ENCODE measurements at regions of chr18 and their contacts with region 1.

Region 1: DNA sequence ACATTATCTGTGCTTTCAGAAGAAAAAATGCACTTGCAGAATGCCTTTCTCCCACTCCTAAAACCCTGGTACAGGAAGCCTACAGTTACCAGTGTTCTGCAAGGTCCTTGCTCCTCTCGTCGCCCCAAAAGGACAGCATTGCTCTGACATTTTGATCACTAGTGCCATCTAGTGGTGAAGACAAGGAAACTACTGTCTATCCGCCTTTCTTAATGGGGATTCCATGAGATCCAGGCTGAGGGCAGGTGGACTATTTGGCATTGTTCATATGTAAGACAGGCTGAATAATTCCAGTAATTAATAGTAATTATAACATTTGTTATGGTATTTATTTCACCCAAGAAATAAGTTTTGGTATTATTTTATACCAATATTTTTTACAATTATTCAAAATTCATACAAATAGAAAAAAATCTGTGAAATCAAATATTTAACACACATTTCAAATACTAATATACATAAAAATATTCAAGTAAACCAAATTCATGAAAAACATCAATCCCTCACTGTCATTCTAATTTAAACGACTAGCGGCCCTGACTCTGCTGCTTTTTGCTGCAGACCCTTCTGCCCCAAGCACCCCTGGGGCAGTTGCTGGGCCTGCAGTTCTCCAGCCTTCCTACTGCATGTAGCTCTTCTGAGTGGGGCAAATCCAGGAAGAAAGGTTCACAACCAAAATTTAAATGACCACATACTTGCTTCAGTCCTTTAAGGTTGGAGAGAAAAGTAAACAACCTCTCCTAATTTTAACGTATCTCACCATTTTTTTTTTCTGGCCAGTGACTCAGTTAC is 19.0 kb downstream of the TPGS2 start:
- DNase-seq: peak; percentile 38 to 64 (median 61)
- H3K4me3 ChIP-seq: no peak overlapping the region
- H3K4me3 Mint-ChIP-seq: no peak overlapping the region
- H3K27ac ChIP-seq: no peak overlapping the region
- H3K27ac Mint-ChIP-seq: peak overlapping the region in 3 of 7 donors; percentile 1 to 87 (median 26)
- H3K4me1 ChIP-seq: no peaks in the 10 kb centered on the region
- H3K4me1 Mint-ChIP-seq: peaks cover 3 to 14% (median 9%) of the 10 kb centered on the region in 4 donors
- H3K27me3 ChIP-seq: no peaks in the 10 kb centered on the region
- H3K27me3 Mint-ChIP-seq: no peaks in the 10 kb centered on the region

Region 2: DNA sequence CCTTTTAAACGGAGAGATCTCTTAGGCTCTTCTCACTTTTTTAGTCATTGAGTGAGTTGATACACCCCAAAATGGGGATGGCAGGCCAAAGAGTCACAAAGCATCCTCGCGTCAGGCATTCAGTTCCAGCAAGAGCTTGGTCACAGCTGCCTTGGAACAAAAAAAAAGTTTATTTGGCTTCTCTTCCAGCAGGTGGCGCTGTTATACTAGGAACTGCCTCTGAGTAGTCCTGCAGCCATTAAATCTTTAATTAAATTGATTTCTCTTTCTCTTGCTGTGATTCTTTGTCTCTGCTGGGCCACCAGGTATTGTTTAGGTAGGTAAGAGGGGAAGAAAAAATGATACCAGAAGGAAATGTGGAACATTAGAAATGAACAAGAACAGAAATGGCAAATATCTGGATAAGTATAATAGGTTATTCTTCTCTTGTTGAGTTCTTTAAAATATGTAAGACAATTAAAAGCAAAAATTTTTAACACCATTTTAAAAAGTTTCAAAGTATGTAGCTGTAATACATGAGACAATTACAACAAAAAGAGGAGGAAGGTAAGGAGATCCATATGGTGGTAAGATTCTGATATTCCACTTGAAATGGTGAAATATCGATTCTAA is 1053.2 kb before region 1 on chr18:
- CTCF ChIA-PET with region 1: no interaction called
- POLR2A ChIA-PET with region 1: no interaction called
- intact Hi-C with region 1: loop called (anchors 5 kb)
- DNase-seq: peak in 4 of 5 donors; percentile 46 to 59 (median 58)
- H3K4me3 ChIP-seq: no peak overlapping the region
- H3K4me3 Mint-ChIP-seq: no peak overlapping the region
- H3K27ac ChIP-seq: no peak overlapping the region
- H3K27ac Mint-ChIP-seq: no peak overlapping the region
- H3K4me1 ChIP-seq: no peaks in the 10 kb centered on the region
- H3K4me1 Mint-ChIP-seq: no peaks in the 10 kb centered on the region
- H3K27me3 ChIP-seq: no peaks in the 10 kb centered on the region
- H3K27me3 Mint-ChIP-seq: peaks cover 11 to 17% of the 10 kb centered on the region in 2 donors

Region 3: GRCh38 chr18:35811896-35812295 is 997.9 kb before region 1 on chr18:
- CTCF ChIA-PET with region 1: no interaction called
- POLR2A ChIA-PET with region 1: no interaction called
- intact Hi-C with region 1: no loop called
- DNase-seq: no peak
- H3K4me3 ChIP-seq: no peak overlapping the region
- H3K4me3 Mint-ChIP-seq: no peak overlapping the region
- H3K27ac ChIP-seq: no peak overlapping the region
- H3K27ac Mint-ChIP-seq: no peak overlapping the region
- H3K4me1 ChIP-seq: no peaks in the 10 kb centered on the region
- H3K4me1 Mint-ChIP-seq: no peaks in the 10 kb centered on the region
- H3K27me3 ChIP-seq: no peaks in the 10 kb centered on the region
- H3K27me3 Mint-ChIP-seq: peaks cover 10 to 13% of the 10 kb centered on the region in 2 donors

Region 4: GRCh38 chr18:36095936-36096519 is 713.8 kb before region 1 on chr18:
- CTCF ChIA-PET with region 1: interaction called, 3 read pairs
- POLR2A ChIA-PET with region 1: no interaction called
- intact Hi-C with region 1: loop called (anchors 1 kb)
- DNase-seq: peak in 4 of 5 donors; percentile 42 to 47 (median 44)
- H3K4me3 ChIP-seq: no peak overlapping the region
- H3K4me3 Mint-ChIP-seq: no peak overlapping the region
- H3K27ac ChIP-seq: no peak overlapping the region
- H3K27ac Mint-ChIP-seq: no peak overlapping the region
- H3K4me1 ChIP-seq: no peaks in the 10 kb centered on the region
- H3K4me1 Mint-ChIP-seq: peaks cover 9 to 13% (median 11%) of the 10 kb centered on the region in 4 donors
- H3K27me3 ChIP-seq: no peaks in the 10 kb centered on the region
- H3K27me3 Mint-ChIP-seq: peaks cover 2 to 5% of the 10 kb centered on the region in 2 donors

Region 5: DNA sequence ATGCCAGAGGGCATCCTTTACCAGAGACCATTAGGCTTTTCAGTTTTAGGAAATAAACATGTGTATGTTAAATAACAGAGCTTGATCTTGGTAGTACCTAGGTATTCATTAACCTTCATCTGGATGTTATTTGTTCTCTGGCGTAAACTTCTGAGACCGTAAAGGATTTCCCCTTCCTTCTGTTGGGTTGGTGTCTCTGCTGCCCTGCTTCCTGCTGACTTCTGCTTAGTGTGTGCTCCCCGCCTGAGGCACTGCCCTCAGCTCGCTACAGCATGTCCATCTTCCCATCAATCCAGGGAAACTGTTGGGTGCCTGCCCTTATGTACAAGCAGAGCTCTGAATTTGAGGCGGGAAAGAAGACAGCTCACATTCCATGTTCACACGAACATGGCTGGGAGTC is 158.9 kb before region 1 on chr18:
- CTCF ChIA-PET with region 1: no interaction called
- POLR2A ChIA-PET with region 1: no interaction called
- intact Hi-C with region 1: no loop called
- DNase-seq: no peak
- H3K4me3 ChIP-seq: no peak overlapping the region
- H3K4me3 Mint-ChIP-seq: no peak overlapping the region
- H3K27ac ChIP-seq: no peak overlapping the region
- H3K27ac Mint-ChIP-seq: no peak overlapping the region
- H3K4me1 ChIP-seq: no peaks in the 10 kb centered on the region
- H3K4me1 Mint-ChIP-seq: no peaks in the 10 kb centered on the region
- H3K27me3 ChIP-seq: no peaks in the 10 kb centered on the region
- H3K27me3 Mint-ChIP-seq: peaks cover 0 to 7% of the 10 kb centered on the region in 2 donors

Region 6: DNA sequence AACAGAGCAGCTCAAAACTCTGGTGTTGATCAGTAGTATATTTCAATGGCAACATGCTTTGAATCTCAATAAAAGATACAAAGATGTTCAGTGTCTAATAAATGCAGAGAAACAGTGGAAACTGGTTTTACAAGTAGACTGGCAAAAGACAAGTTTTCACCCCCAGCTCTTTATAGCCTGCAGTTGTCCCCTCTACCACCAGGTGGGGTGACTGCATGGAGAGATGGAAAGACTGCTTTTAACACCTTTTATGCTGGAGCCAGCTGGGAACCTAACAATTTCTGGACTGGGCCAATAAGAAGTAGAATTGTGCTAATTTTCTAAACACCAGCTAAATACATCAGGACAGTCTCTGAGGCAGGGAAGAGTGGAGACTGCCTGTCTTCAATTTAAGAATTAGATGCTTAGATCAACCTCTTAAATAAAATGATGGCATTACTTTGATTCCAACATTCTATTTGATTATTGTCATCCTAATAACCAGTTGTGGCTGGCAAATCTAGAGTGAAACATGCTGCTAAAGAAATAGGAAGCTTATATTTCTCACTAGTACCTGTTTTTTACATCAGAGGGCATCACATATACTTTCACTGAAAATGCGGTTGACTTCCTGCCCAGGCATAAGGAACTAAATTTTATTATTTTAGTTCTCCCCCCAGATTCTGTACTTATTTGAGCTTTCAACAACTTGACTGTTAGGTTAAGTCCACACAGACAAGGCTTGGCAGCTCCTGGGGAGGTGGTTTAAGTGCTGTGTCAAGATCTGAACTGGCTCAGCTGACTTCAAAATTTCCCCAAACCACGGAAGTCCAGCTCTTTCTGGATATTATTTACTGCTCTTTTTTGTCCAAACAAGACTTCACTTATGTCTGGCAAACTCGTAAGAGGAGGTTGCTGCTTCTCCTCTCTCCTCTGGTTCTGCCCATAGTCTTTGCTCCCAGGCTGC is 121.5 kb before region 1 on chr18:
- CTCF ChIA-PET with region 1: interaction called, 50 read pairs
- POLR2A ChIA-PET with region 1: no interaction called
- intact Hi-C with region 1: no loop called
- DNase-seq: peak in 4 of 5 donors; percentile 16 to 21 (median 20)
- H3K4me3 ChIP-seq: no peak overlapping the region
- H3K4me3 Mint-ChIP-seq: no peak overlapping the region
- H3K27ac ChIP-seq: no peak overlapping the region
- H3K27ac Mint-ChIP-seq: peak overlapping the region in 1 of 7 donors; percentile 36
- H3K4me1 ChIP-seq: no peaks in the 10 kb centered on the region
- H3K4me1 Mint-ChIP-seq: no peaks in the 10 kb centered on the region
- H3K27me3 ChIP-seq: no peaks in the 10 kb centered on the region
- H3K27me3 Mint-ChIP-seq: peaks cover 5 to 7% of the 10 kb centered on the region in 2 donors

Region 7: GRCh38 chr18:36798738-36799473 is 10.9 kb before region 1 on chr18:
- CTCF ChIA-PET with region 1: interaction called, 10 read pairs
- POLR2A ChIA-PET with region 1: no interaction called
- intact Hi-C with region 1: no loop called
- DNase-seq: no peak
- H3K4me3 ChIP-seq: no peak overlapping the region
- H3K4me3 Mint-ChIP-seq: no peak overlapping the region
- H3K27ac ChIP-seq: no peak overlapping the region
- H3K27ac Mint-ChIP-seq: peak overlapping the region in 3 of 7 donors; percentile 1 to 59 (median 16)
- H3K4me1 ChIP-seq: no peaks in the 10 kb centered on the region
- H3K4me1 Mint-ChIP-seq: no peaks in the 10 kb centered on the region
- H3K27me3 ChIP-seq: no peaks in the 10 kb centered on the region
- H3K27me3 Mint-ChIP-seq: no peaks in the 10 kb centered on the region

Region 8: DNA sequence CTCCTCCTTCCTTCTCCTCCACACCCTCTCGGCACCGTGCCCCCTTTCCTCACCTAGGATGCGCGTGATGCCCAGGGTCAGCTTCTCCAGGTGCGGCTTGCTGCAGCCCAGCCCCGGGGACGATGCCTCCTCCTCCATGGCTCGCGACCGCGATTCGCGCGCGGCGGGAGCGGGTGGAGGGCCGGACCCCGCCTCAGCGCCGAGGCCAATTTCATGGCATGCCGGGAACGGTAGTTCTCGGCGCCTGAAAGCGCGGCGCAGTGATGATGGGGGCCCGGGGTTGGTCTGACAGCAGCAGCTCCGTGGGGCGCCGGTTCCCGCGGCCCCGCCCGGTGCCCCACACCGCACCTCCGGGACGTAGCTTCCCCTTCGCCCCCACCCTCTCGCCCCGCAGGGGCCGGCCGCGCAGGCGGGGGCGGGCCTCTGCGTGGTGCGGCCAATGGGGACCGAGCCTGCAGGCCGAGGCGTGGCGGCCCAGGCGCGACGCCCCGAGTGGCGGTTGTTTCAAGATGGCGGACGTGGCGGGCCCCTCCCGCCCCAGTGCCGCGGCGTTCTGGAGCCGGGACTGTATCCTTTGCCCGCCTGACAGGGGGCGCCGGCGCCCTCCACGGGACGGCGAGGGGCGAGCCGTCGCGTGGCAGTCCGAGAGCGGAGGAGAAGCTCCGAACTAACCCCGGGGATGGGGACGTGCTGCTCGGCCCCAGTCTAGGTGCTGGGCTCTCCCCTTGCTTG is 19.0 kb after region 1 on chr18 and contains the starts of genes KIAA1328 and TPGS2:
- CTCF ChIA-PET with region 1: interaction called, 22 read pairs
- POLR2A ChIA-PET with region 1: interaction called, 4 read pairs
- intact Hi-C with region 1: loop called (anchors 2 kb)
- DNase-seq: peak; percentile 85 to 91 (median 90)
- H3K4me3 ChIP-seq: peak within 1 kb of the TSS; percentile 94 to 99
- H3K4me3 Mint-ChIP-seq: peak within 1 kb of the TSS; percentile 84 to 97 (median 90)
- H3K27ac ChIP-seq: peak within 1 kb of the TSS; percentile 82
- H3K27ac Mint-ChIP-seq: peak within 1 kb of the TSS; percentile 80 to 96 (median 94)
- H3K4me1 ChIP-seq: peaks cover 26% of the 10 kb centered on the region
- H3K4me1 Mint-ChIP-seq: peaks cover 22 to 55% (median 36%) of the 10 kb centered on the region in 4 donors
- H3K27me3 ChIP-seq: no peaks in the 10 kb centered on the region
- H3K27me3 Mint-ChIP-seq: no peaks in the 10 kb centered on the region
- total RNA-seq, gene KIAA1328: 12.3 to 15.7 TPM
- total RNA-seq, gene TPGS2: 51.6 to 54.7 TPM

Region 9: GRCh38 chr18:36899289-36899688 is 89.5 kb after region 1 on chr18:
- CTCF ChIA-PET with region 1: no interaction called
- POLR2A ChIA-PET with region 1: no interaction called
- intact Hi-C with region 1: no loop called
- DNase-seq: peak in 1 of 5 donors; percentile 8
- H3K4me3 ChIP-seq: no peak overlapping the region
- H3K4me3 Mint-ChIP-seq: no peak overlapping the region
- H3K27ac ChIP-seq: no peak overlapping the region
- H3K27ac Mint-ChIP-seq: no peak overlapping the region
- H3K4me1 ChIP-seq: no peaks in the 10 kb centered on the region
- H3K4me1 Mint-ChIP-seq: peaks cover 0 to 4% (median under 1%) of the 10 kb centered on the region in 4 donors
- H3K27me3 ChIP-seq: no peaks in the 10 kb centered on the region
- H3K27me3 Mint-ChIP-seq: no peaks in the 10 kb centered on the region

Measured in CD4-positive, alpha-beta memory T cell (primary cell).